ENCODE measurements at regions of chr12 and their contacts with region 1.

Region 1: GRCh38 chr12:57693659-57694458 is at the start of gene OS9:
- DNase-seq: peak; percentile 98
- H3K4me3 Mint-ChIP-seq: no peak within 1 kb of the TSS
- H3K27ac Mint-ChIP-seq: no peak within 1 kb of the TSS
- H3K4me1 Mint-ChIP-seq: peaks cover 1% of the 10 kb centered on the region
- H3K27me3 Mint-ChIP-seq: peaks cover 13% of the 10 kb centered on the region
- total RNA-seq, gene OS9: 84.3 and 92.6 TPM in 2 replicates

Region 2: GRCh38 chr12:57476162-57476992 is 217.5 kb before region 1 on chr12:
- intact Hi-C with region 1: loop called (anchors 10 kb)
- DNase-seq: peak; percentile 93
- H3K4me3 Mint-ChIP-seq: peak overlapping the region; percentile 96
- H3K27ac Mint-ChIP-seq: peak overlapping the region; percentile 97
- H3K4me1 Mint-ChIP-seq: peaks cover 68% of the 10 kb centered on the region
- H3K27me3 Mint-ChIP-seq: no peaks in the 10 kb centered on the region

Region 3: DNA sequence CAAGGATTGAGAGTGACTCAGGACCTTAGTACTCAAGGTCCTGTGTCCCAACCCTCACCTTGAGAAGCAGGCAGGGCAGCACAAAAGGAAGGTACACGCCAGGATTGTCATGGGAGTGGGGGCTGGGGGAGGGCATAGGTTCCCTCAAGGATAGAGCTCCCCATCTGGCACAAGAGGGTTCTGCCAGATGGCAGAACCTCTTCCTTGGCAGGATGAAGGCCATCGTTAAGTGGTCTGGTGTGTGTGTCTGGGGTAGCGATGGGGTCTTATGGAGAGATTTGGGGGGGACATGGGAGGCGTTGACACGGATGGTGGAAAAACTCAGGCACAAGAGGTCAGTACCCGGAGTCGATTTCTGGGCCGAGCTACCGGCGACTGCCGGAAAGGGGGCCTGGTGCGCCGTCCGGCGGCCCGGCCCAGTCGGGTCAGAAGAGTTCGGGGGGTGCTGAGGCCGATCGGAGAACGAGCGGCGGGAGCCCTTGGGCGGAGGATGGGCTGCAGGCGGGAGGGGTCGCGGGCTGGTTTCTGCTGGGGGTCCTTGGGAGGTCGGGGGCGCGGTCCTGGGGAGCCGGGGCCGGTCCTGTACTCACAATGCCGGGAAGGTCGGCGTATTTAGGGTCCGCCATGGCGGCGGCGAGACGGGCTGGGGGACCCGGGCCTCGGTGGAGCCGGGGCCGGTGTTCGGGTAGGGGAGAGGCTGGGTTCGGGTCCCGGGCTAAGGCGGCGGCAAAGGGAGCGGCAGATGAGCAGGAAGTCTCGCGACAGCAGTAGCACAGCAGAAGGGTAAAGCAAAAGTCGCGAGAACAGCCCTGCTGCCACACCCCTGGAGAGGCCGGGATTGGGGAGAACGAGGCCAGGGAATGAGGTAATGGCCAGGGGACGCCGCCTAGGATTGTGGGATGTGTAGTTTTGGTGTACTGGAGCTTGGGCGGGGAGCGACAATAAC is 147.1 kb before region 1 on chr12 and contains the start of gene DCTN2:
- intact Hi-C with region 1: loop called (anchors 5 kb)
- DNase-seq: peak; percentile 98
- H3K4me3 Mint-ChIP-seq: peak within 1 kb of the TSS; percentile 96
- H3K27ac Mint-ChIP-seq: peak within 1 kb of the TSS; percentile 94
- H3K4me1 Mint-ChIP-seq: peaks cover 42% of the 10 kb centered on the region
- H3K27me3 Mint-ChIP-seq: peaks cover 21% of the 10 kb centered on the region
- total RNA-seq, gene DCTN2: 78.9 and 80.9 TPM in 2 replicates

Region 4: GRCh38 chr12:57583008-57583831 is 110.6 kb before region 1 on chr12:
- intact Hi-C with region 1: loop called (anchors 5 kb)
- DNase-seq: peak; percentile 92
- H3K4me3 Mint-ChIP-seq: no peak overlapping the region
- H3K27ac Mint-ChIP-seq: no peak overlapping the region
- H3K4me1 Mint-ChIP-seq: peaks cover 3% of the 10 kb centered on the region
- H3K27me3 Mint-ChIP-seq: peaks cover 10% of the 10 kb centered on the region

Region 5: DNA sequence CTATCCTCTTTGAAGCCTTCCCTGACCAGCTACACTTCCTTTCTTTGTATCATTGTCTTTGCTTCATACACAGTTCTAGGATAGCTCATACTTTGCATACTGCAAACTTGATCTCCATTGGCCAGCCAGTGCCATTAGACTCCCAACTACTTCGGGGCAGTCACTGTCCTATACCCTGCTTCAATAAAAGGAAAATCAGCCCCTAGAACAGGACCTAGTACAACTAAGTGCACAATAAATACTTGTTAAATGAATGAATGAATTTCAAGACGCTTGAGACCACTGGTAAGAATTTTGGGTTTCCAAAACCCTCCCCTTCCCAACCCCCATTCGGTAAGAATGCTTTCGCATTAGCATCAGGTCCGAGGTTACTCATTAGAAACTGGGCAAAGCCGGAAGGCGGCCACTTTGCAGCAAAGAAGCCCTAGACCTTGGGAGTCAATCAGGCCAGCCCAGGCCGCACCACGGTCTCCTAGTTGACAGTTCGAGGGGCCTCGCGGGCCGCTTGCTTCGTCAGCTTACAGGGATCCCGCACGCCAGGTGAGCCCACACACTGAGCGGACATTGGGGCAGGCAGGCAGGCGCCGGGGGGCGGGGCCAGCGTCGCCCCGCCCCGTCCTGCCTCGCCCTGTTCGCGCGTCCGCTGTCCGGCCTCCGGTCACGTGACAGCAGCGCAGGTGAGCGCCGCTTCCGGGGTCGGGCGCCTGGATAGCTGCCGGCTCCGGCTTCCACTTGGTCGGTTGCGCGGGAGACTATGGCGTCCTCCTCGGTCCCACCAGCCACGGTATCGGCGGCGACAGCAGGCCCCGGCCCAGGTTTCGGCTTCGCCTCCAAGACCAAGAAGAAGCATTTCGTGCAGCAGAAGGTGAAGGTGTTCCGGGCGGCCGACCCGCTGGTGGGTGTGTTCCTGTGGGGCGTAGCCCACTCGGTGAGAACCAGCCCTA is 103.1 kb before region 1 on chr12 and contains the start of gene PIP4K2C:
- intact Hi-C with region 1: loop called (anchors 1 kb)
- DNase-seq: peak; percentile 94
- H3K4me3 Mint-ChIP-seq: peak within 1 kb of the TSS; percentile 89
- H3K27ac Mint-ChIP-seq: peak within 1 kb of the TSS; percentile 76
- H3K4me1 Mint-ChIP-seq: peaks cover 25% of the 10 kb centered on the region
- H3K27me3 Mint-ChIP-seq: peaks cover 3% of the 10 kb centered on the region
- total RNA-seq, gene PIP4K2C: 21.5 and 23.0 TPM in 2 replicates

Region 6: DNA sequence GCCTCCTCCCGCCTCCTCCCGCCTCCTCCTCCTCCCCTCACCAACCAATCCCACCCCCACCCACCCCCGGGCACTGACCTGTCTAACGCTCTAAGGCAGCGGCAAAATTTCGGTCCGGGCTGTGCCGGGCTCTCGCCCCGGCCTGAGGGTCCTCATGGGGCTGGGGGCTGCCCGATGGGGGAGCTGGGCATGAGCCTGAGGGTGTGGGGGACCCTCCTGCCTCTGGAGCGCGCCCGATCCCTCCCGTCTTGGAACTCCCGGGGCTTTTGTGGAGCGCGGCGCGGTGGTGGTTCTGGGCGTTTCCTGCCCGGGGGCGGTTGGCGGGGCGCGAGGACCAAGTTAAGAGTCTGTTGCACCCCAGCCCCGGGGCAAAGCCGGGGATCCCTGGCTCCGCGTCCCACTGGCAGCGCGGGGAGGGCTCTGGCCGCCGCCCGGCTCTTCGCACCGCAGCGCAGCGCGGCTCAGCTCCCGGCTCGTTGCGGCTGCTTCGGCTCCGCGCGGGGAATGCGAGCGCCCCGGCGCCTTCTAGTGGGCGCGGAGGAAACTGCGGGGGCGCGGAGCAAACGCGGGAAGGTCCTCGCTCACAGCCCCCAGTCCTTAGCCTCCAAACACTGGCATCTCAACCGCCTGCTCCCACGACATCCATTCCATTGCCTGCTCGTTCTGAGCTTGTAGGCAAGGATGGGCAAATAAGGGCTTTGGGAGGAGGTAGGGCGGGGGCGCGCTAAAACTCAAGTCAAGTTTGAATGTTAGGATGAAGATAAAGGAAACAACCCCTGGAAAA is 61.0 kb before region 1 on chr12 and contains the start of gene B4GALNT1:
- intact Hi-C with region 1: loop called (anchors 5 kb)
- DNase-seq: peak; percentile 92
- H3K4me3 Mint-ChIP-seq: peak within 1 kb of the TSS; percentile 84
- H3K27ac Mint-ChIP-seq: no peak within 1 kb of the TSS
- H3K4me1 Mint-ChIP-seq: peaks cover 10% of the 10 kb centered on the region
- H3K27me3 Mint-ChIP-seq: peaks cover 59% of the 10 kb centered on the region
- total RNA-seq, gene B4GALNT1: 4.6 and 5.7 TPM in 2 replicates

Region 7: GRCh38 chr12:57744777-57745484 is 51.1 kb after region 1 on chr12 and contains the start of gene TSPAN31:
- intact Hi-C with region 1: loop called (anchors 1 kb)
- DNase-seq: peak; percentile 98
- H3K4me3 Mint-ChIP-seq: peak within 1 kb of the TSS; percentile 94
- H3K27ac Mint-ChIP-seq: peak within 1 kb of the TSS; percentile 90
- H3K4me1 Mint-ChIP-seq: peaks cover 45% of the 10 kb centered on the region
- H3K27me3 Mint-ChIP-seq: no peaks in the 10 kb centered on the region
- total RNA-seq, gene TSPAN31: 19.2 and 19.4 TPM in 2 replicates